Ascending aorta (tissue), 2 donors: ENCODE measurements at regions of chr20 and their contacts with region 1.

Region 1: GRCh38 chr20:49812463-49813304 is at the start of gene SLC9A8:
- DNase-seq: peak; percentile 73 to 96
- H3K4me3 ChIP-seq: peak within 1 kb of the TSS; percentile 72 to 94
- H3K27ac ChIP-seq: peak within 1 kb of the TSS; percentile 89 to 96
- H3K4me1 ChIP-seq: peaks cover 0 to 8% of the 10 kb centered on the region in 2 donors
- H3K27me3 ChIP-seq: no peaks in the 10 kb centered on the region
- CTCF ChIP-seq: peak in 2 of 3 experiments; percentile 38 to 39
- total RNA-seq, gene SLC9A8: 9.7 TPM

Region 2: DNA sequence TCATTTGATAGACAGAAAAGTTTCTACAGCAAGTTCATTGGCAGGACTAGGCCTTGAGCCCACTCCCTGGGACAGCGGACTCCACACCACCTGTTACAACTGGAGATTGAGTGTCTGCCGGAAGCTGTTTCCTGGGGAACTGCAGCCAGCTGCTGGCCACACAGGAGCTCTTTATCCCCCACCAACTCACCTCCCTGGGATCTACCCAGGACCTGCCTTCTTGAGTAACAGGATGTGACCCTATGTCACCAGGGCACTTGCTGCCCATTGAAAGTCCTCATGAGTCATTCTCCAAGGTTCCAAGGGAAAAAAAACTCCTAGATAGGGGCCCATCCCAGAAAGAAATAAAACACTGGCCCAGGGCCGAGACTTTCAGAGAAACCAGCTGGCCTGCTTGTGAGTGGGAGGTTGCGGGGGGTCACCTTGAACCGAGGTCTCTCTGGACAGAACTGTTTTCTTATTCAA is 37.4 kb before region 1 on chr20:
- intact Hi-C with region 1: loop called (anchors 2 kb)
- DNase-seq: peak in 1 of 2 donors; percentile 82
- H3K4me3 ChIP-seq: no peak overlapping the region
- H3K27ac ChIP-seq: peak overlapping the region; percentile 26 to 49
- H3K4me1 ChIP-seq: peaks cover 0 to 8% of the 10 kb centered on the region in 2 donors
- H3K27me3 ChIP-seq: no peaks in the 10 kb centered on the region
- CTCF ChIP-seq: no peak

Region 3: GRCh38 chr20:49853640-49854039 is 41.0 kb after region 1 on chr20:
- intact Hi-C with region 1: loop called (anchors 5 kb)
- DNase-seq: peak; percentile 39 to 89
- H3K4me3 ChIP-seq: no peak overlapping the region
- H3K27ac ChIP-seq: peak overlapping the region; percentile 76 to 82
- H3K4me1 ChIP-seq: peaks cover 15 to 48% of the 10 kb centered on the region in 2 donors
- H3K27me3 ChIP-seq: no peaks in the 10 kb centered on the region
- CTCF ChIP-seq: no peak

Region 4: GRCh38 chr20:49888345-49888966 is 75.8 kb after region 1 on chr20:
- intact Hi-C with region 1: loop called (anchors 2 kb)
- DNase-seq: no peak
- H3K4me3 ChIP-seq: no peak overlapping the region
- H3K27ac ChIP-seq: peak overlapping the region; percentile 79 to 84
- H3K4me1 ChIP-seq: peaks cover 16 to 33% of the 10 kb centered on the region in 2 donors
- H3K27me3 ChIP-seq: no peaks in the 10 kb centered on the region
- CTCF ChIP-seq: peak; percentile 68 to 84 (median 81)

Region 5: DNA sequence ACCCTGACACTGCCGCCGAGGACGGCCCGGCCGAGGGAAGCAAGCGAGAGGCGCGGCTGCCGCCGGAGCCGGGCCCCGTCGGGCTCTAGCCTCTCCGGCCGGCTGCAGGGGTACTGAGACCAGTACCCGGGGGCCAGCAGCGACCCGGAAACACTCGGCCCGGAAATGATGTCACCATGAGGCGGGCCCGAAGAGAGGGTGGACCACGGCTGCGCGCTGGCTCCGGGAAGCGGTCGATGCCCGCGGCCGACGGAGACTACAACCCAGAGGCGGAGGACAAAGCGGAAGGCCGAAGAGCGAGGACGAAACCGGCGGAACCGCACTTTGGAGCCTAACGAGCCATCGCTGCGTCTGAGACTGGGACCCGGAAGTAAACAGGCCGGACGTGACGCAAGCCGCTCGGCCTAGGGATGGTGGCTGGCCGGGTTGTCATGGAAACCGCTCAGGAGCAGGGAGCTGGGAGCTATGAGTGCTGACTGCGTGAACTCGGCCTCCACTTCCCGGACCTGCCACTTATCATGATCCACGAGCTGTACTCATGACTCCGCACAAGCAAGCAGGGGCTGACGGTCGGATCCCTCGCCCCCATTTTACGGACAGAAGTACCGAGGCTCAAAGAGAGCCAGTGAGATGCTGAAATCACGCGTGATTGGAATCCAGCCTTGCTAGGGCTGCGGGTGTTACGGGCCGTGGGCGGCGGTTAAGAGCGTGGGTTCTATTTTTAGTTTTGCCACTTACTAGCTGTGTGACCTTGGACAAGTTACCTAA is 102.9 kb after region 1 on chr20 and contains the start of gene SPATA2:
- intact Hi-C with region 1: loop called (anchors 1 kb)
- DNase-seq: peak; percentile 89 to 99
- H3K4me3 ChIP-seq: peak within 1 kb of the TSS; percentile 83 to 88
- H3K27ac ChIP-seq: peak within 1 kb of the TSS; percentile 95 to 100
- H3K4me1 ChIP-seq: peaks cover 7 to 18% of the 10 kb centered on the region in 2 donors
- H3K27me3 ChIP-seq: no peaks in the 10 kb centered on the region
- CTCF ChIP-seq: no peak
- total RNA-seq, gene SPATA2: 7.6 TPM

Region 6: DNA sequence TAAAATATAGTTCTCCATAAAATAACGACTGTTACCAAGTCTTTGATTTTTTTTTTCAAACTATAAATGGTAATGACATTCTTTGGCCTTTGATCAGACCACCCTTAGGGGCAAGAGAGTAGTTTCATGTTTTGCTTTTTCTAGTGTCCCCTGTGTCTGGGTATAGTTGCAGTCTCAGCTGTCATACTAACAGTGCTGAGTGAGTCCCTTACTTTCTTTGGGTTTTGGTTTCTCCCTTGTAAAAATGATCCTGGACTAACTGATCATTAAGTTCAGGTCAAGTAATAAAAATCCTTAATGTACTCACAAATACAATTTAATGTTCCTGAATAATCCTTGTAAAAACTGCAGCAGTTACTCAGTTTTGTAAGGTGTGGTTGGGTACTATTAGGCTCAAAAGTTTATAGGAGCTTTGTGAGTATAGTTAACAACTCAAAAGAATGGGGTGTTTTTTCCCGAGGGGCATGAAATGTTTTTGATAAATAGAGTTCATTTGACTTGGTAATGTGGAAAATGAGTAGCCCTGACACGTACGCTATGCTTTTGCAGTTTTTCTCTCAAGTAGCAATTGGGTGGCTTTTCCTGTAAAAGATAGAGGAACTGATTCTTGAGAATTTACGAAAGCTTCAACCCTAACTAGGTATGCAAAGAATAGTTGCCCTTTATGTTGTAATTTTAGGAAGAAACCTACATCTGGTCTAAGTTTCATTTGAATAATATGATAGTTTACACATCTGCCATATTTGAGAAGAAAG is 703.7 kb after region 1 on chr20:
- intact Hi-C with region 1: no loop called
- DNase-seq: no peak
- H3K4me3 ChIP-seq: no peak overlapping the region
- H3K27ac ChIP-seq: peak overlapping the region in 1 of 2 donors; percentile 10
- H3K4me1 ChIP-seq: peaks cover 7 to 46% of the 10 kb centered on the region in 2 donors
- H3K27me3 ChIP-seq: no peaks in the 10 kb centered on the region
- CTCF ChIP-seq: no peak

Region 7: DNA sequence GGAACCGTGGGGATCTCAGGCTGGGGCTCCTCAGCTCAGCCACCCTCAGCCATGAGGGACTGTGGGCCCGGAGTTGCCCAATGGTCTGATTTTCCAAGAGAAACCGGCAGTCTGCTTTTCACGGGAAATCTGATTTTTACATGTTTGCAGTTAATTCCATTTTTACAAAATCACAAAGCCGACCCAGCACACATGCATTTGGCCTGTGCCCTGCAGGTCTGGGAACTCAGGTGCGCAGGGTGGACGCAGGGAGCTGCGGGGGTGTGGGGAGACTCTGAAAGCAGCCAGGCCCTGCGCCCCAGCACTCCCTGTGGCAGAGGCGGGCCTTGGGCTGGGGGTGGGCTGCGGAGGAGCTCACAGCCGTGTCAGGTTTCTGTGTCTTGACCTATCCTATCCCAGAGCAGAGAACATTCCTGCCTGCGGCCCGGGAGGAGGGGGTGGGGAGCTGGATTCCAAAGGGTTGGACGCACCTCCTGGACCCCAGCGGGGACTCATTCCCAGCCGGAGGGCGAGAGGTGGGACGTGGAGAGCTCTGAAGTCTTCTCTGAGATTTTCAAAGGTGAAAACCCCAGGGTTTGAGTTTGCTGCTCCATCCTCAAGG is 1058.0 kb after region 1 on chr20:
- intact Hi-C with region 1: no loop called
- DNase-seq: no peak
- H3K4me3 ChIP-seq: no peak overlapping the region
- H3K27ac ChIP-seq: no peak overlapping the region
- H3K4me1 ChIP-seq: no peaks in the 10 kb centered on the region
- H3K27me3 ChIP-seq: no peaks in the 10 kb centered on the region
- CTCF ChIP-seq: no peak